ENCODE measurements at regions of chr16 and their contacts with region 1.

Region 1: DNA sequence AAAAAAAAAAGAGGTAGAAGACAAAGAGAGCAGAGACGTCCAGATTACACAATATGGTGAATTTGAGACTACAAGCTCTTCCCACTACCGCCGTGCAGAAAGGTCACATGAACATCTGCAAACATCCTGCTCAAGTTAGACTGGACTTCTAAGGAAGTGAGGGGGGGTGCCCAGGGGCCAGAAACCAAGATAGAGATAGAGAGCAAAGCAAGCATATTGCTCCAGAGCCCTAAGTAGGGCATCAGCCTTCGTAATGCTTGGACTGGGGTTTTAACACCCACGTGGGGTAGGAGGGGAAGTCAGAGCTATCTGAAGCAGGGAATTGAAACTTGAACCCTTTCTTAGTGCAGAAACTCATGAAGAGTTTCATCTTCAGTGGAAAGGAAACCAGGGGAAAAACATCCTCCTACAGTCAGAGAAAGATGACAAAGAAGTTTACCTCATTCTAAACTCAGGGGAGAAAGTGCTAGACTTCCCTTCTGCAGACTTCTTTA is 8.7 kb downstream of the CLEC19A start:
- DNase-seq: peak; percentile 71
- H3K4me3 Mint-ChIP-seq: peak overlapping the region; percentile 48
- H3K27ac Mint-ChIP-seq: peak overlapping the region; percentile 90
- H3K4me1 Mint-ChIP-seq: peaks cover 26% of the 10 kb centered on the region
- H3K27me3 Mint-ChIP-seq: peaks cover 4% of the 10 kb centered on the region

Region 2: GRCh38 chr16:19067349-19068236 is 226.6 kb before region 1 on chr16 and contains the start of gene COQ7:
- intact Hi-C with region 1: loop called (anchors 5 kb)
- DNase-seq: peak; percentile 99
- H3K4me3 Mint-ChIP-seq: peak within 1 kb of the TSS; percentile 92
- H3K27ac Mint-ChIP-seq: peak within 1 kb of the TSS; percentile 97
- H3K4me1 Mint-ChIP-seq: peaks cover 16% of the 10 kb centered on the region
- H3K27me3 Mint-ChIP-seq: peaks cover 3% of the 10 kb centered on the region
- total RNA-seq, gene COQ7: 21.6 and 22.0 TPM in 2 replicates

Region 3: DNA sequence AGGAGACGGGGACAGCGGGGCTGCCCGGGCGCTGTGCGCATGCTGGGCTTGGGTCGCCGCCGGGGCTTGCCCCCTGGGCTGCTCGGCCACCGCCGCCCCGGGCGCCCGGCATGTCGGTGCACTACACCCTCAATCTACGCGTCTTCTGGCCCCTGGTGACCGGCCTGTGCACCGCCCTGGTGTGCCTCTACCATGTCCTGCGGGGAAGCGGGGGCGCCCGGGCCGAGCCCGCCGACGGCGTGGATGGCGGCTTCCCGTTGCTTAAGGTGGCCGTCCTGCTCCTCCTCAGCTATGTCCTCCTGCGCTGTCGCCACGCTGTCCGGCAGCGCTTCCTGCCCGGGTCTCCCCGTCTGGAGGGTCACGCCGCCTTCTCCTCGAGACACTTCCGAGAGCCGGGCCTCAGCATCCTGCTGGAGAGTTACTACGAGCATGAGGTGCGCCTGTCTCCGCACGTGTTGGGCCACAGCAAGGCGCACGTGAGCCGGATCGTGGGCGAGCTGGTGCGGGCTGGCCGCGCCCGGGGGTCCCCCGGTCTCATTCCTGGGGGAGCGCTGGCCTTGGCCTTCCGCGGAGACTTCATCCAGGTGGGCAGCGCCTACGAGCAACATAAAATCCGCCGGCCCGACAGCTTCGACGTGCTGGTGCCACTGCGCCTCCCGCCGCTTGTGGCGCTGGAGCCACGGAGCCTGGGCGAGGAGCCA is 179.7 kb before region 1 on chr16:
- intact Hi-C with region 1: loop called (anchors 1 kb)
- DNase-seq: peak; percentile 73
- H3K4me3 Mint-ChIP-seq: peak overlapping the region; percentile 87
- H3K27ac Mint-ChIP-seq: peak overlapping the region; percentile 87
- H3K4me1 Mint-ChIP-seq: peaks cover 35% of the 10 kb centered on the region
- H3K27me3 Mint-ChIP-seq: peaks cover 9% of the 10 kb centered on the region

Region 4: GRCh38 chr16:19223235-19224170 is 70.7 kb before region 1 on chr16:
- intact Hi-C with region 1: loop called (anchors 10 kb)
- DNase-seq: peak; percentile 78
- H3K4me3 Mint-ChIP-seq: no peak overlapping the region
- H3K27ac Mint-ChIP-seq: no peak overlapping the region
- H3K4me1 Mint-ChIP-seq: no peaks in the 10 kb centered on the region
- H3K27me3 Mint-ChIP-seq: peaks cover 3% of the 10 kb centered on the region

Region 5: GRCh38 chr16:19356024-19356952 is 62.1 kb after region 1 on chr16:
- intact Hi-C with region 1: loop called (anchors 2 kb)
- DNase-seq: no peak
- H3K4me3 Mint-ChIP-seq: no peak overlapping the region
- H3K27ac Mint-ChIP-seq: no peak overlapping the region
- H3K4me1 Mint-ChIP-seq: peaks cover 6% of the 10 kb centered on the region
- H3K27me3 Mint-ChIP-seq: no peaks in the 10 kb centered on the region

Region 6: DNA sequence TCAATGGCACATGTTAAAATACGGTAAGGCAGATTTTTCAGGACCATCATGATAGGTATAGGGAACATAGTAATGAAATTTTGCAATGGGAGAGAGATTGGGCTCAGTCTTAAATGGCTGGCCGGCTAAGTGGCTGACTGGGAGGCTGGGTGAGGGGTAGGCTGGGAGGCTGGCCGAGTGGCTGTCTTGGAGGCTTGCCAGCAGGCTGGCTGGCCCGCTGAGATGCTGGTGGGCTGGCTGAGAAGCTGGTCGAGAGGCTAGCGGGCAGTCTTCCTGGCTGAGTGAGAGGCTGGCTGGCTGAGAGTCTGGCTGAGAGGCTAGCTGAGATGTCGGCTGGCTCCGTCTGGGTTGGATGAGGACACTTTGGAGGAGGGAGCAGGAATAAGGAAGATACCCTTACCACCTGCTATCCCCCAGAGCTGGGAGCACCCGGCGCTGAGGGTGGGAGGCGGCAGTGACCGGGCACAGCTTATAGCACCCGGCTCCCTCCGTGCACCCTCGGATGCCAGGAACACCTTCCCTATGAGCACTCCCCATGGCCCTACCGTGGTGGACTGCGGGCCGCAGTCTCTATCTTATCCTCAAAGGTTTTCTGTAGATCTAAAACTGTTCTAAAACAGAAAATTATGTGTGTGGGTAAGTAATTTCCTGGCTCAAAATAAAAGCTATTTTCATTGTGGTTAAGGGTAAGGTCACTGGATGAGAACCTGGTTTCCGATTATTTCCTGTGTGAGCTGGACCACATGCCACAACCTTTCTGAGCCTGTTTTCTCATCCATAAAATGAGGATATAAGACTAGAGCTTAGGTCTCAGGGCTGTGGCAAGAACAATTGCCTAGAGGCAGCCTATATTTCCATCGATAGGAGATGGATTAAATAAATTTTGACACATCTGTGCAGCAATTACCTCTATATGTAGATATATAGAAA is 88.9 kb after region 1 on chr16:
- intact Hi-C with region 1: loop called (anchors 1 kb)
- DNase-seq: peak; percentile 64
- H3K4me3 Mint-ChIP-seq: peak overlapping the region; percentile 22
- H3K27ac Mint-ChIP-seq: peak overlapping the region; percentile 11
- H3K4me1 Mint-ChIP-seq: peaks cover 35% of the 10 kb centered on the region
- H3K27me3 Mint-ChIP-seq: peaks cover 31% of the 10 kb centered on the region